ENCODE measurements at regions of chr3 and their contacts with region 1.

Region 1: GRCh38 chr3:8441969-8442559 is 59.6 kb upstream of the LMCD1 start:
- ATAC-seq: peak in 3 of 8 experiments; percentile 6 to 58 (median 10)
- H3K4me3 ChIP-seq: no peak overlapping the region
- H3K27ac ChIP-seq: no peak overlapping the region
- H3K4me1 ChIP-seq: peaks cover 19% of the 10 kb centered on the region in 2 donors

Region 2: DNA sequence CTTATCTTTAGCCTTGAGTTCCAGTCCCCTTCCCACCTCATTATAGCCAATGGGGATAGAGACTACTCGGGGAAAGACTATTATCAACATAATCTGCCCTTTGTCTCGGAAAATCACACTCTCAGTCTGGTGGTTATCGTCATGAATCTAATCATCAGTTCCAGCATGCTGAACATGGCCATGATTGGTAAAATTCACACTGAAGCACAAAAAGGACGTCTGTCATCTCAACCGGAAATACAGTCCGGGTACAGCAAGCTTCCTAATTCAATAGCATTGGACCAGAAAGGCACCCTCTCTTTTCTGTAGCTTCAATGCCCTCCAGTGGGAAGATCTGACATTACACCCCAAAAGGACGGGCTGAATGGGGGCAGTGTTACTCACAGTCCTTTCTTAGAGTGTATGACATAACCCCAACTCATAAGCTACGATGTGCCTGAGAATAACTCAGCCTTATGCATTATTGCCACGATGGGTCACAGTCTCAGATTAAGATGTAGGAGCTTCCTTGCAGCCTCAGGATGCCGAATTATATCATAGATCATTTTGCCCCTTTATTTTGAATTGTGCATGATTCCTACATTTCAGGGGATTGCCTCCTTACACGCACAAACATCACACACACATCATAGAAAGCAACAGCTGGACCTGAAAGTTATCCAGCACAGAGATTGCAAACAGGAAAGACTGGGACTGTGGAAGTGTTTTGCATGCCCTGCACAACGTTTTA is 330.8 kb before region 1 on chr3:
- in situ Hi-C with region 1: no loop called
- ATAC-seq: peak; percentile 91 to 96 (median 94)
- H3K4me3 ChIP-seq: no peak overlapping the region
- H3K27ac ChIP-seq: no peak overlapping the region
- H3K4me1 ChIP-seq: peaks cover 18 to 20% of the 10 kb centered on the region in 2 donors

Region 3: DNA sequence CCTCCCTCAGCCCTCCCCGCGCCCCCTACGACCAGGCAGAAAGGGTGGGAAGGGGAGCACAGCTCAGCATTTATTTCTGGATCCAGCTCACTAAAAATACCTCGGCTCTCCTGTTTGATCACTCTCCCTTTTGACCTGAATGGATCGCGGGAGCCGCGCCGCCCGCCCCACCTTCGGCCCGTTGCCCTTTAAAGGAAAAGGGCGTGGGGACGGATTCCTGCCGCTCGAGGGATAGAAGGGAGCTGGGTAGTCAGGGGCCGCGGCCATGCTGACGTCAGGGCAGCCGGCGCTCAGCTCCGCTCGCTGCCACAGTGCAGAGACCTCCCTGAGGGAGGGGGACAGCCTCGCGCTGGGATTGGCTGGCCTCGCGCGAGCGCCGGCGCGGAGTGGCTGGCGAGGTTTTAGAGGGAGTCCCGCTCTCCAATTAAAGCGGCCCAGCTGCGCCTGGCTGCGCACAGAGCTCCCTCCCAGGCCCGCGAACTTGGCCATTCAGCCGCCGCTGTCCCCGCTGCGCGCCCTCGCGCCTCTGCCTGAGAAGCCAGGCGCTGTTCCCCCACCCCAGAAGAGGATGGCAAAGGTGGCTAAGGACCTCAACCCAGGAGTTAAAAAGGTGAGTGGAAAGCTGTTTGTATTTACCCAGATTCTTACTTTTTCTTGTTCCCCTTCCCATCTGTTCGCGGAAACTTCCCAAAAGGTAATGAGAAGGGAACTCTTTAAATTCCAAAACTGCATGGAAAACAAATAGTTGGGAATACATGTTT is 59.5 kb after region 1 on chr3 and contains the start of gene LMCD1:
- in situ Hi-C with region 1: loop called in 1 of 9 experiments (anchors 10 kb)
- ATAC-seq: peak; percentile 91 to 99 (median 96)
- H3K4me3 ChIP-seq: peak within 1 kb of the TSS; percentile 44 to 66 (median 46)
- H3K27ac ChIP-seq: peak within 1 kb of the TSS; percentile 84 to 88
- H3K4me1 ChIP-seq: peaks cover 26 to 27% of the 10 kb centered on the region in 2 donors
- total RNA-seq, gene LMCD1: 1.8 to 57.1 (median 5.3) TPM

Region 4: DNA sequence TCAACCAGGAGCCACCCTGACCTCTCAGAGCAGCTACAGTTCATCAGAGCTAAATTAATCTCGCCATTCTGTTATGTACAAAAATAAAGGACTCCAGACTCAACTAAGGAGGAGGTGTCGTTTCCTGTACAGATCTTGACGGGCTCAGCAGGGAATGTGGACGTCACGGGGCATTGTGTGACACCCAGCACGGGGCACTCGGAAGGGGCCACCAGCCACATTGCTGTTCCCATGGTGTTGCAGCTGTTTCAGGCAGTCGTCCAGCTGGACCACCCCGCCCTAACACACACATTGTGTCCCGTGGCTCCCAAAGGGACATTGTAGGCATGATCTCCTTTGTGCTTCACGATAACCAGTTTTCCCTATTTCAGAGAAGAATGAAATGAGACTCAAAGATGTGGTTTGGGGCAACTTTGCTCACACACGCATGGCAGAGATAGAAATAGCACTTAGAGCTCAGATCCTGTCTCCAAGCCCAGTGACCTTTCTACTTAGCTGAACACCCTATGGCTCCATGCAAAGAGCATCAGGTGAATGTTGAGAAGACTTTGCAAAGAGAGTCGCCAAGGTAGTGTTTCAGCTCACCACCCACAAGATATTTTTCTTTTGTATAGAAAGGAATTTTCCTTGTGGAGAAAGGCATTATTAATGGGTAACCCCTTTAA is 197.1 kb after region 1 on chr3:
- in situ Hi-C with region 1: no loop called
- ATAC-seq: peak in 5 of 8 experiments; percentile 86 to 93 (median 90)
- H3K4me3 ChIP-seq: no peak overlapping the region
- H3K27ac ChIP-seq: peak overlapping the region; percentile 43 to 75
- H3K4me1 ChIP-seq: peaks cover 21 to 28% of the 10 kb centered on the region in 2 donors

Measured in motor neuron (in vitro differentiated cells).